ENCODE measurements at regions of chr6 and their contacts with region 1.

Region 1: GRCh38 chr6:21593412-21593926 is at the start of gene SOX4:
- DNase-seq: peak; percentile 98
- ATAC-seq: peak; percentile 65
- H3K4me3 ChIP-seq: peak within 1 kb of the TSS; percentile 99
- H3K27ac ChIP-seq: peak within 1 kb of the TSS; percentile 69
- H3K4me1 ChIP-seq: peaks cover 26% of the 10 kb centered on the region
- H3K27me3 ChIP-seq: no peaks in the 10 kb centered on the region
- CTCF ChIP-seq: no peak
- total RNA-seq, gene SOX4: 46.1 and 62.8 TPM in 2 replicates

Region 2: GRCh38 chr6:20969551-20969950 is 623.9 kb before region 1 on chr6:
- CTCF ChIA-PET with region 1: no interaction called
- POLR2A ChIA-PET with region 1: interaction called, 11 read pairs
- intact Hi-C with region 1: no loop called
- DNase-seq: no peak
- ATAC-seq: no peak
- H3K4me3 ChIP-seq: no peak overlapping the region
- H3K27ac ChIP-seq: no peak overlapping the region
- H3K4me1 ChIP-seq: no peaks in the 10 kb centered on the region
- H3K27me3 ChIP-seq: no peaks in the 10 kb centered on the region
- CTCF ChIP-seq: no peak

Region 3: DNA sequence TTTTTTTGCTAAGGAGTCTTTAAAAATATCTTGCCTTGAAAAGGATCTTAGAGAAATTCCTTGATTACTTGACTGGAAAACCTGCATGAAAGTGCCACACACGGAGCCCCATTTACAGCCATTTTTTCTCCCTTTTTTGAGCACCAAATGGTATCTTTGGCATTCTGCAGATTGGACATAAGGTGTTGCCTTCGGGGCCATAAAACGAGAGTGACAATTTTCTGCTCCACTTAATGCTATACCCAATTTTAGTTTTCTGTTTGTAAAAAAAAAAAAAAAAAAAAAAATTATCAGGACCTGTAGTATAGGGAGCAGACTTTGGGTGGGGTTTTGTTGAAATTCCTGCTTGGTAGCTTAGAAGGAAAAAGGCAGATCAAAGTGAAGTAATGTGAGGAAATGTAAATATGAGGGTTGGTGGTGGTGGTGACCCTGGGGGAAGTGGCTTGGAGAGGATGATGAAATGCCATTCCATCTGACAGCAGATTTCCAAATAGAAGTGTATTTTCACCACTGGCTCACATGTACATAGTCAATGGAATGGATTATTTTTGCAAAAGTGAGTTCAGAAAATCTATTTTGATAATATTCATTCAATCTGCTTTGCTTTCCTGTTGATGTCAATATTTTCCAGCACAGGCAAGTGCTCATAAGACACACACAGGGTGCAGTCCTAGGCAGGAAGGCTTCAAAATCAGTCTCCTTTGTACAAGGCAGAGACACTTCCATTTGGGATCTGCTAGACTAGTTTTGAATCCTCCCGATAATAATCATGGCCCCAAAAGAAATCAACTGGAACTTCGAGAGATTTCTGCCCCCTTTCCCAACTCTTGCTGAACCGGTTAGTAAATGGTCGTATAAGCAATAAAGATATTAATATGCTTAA is 211.9 kb before region 1 on chr6:
- CTCF ChIA-PET with region 1: no interaction called
- POLR2A ChIA-PET with region 1: no interaction called
- intact Hi-C with region 1: loop called (anchors 10 kb)
- DNase-seq: peak; percentile 89
- ATAC-seq: peak; percentile 80
- H3K4me3 ChIP-seq: no peak overlapping the region
- H3K27ac ChIP-seq: peak overlapping the region; percentile 46
- H3K4me1 ChIP-seq: peaks cover 36% of the 10 kb centered on the region
- H3K27me3 ChIP-seq: no peaks in the 10 kb centered on the region
- CTCF ChIP-seq: no peak

Region 4: DNA sequence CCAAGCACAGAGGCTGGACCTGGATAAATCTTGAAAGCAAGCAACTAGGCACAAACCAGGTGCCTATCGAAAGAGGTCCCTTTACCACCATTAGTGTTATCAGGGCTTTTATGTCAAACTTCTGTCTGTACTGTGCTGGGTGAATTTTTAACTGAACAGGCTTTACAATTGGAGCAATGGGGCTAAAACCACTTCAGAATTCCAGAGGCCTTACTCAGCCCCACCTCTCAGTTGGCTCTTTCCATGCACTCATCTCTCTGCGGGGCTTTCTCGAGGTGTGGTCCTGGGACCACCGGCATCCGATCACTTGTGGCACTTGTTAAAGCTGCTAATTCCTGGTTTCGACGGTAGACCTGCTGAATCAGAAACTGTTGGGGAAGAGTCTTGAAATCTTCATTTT is 232.6 kb after region 1 on chr6:
- CTCF ChIA-PET with region 1: no interaction called
- POLR2A ChIA-PET with region 1: no interaction called
- intact Hi-C with region 1: loop called (anchors 5 kb)
- DNase-seq: peak; percentile 62
- ATAC-seq: peak; percentile 40
- H3K4me3 ChIP-seq: no peak overlapping the region
- H3K27ac ChIP-seq: no peak overlapping the region
- H3K4me1 ChIP-seq: peaks cover 33% of the 10 kb centered on the region
- H3K27me3 ChIP-seq: no peaks in the 10 kb centered on the region
- CTCF ChIP-seq: no peak

Region 5: DNA sequence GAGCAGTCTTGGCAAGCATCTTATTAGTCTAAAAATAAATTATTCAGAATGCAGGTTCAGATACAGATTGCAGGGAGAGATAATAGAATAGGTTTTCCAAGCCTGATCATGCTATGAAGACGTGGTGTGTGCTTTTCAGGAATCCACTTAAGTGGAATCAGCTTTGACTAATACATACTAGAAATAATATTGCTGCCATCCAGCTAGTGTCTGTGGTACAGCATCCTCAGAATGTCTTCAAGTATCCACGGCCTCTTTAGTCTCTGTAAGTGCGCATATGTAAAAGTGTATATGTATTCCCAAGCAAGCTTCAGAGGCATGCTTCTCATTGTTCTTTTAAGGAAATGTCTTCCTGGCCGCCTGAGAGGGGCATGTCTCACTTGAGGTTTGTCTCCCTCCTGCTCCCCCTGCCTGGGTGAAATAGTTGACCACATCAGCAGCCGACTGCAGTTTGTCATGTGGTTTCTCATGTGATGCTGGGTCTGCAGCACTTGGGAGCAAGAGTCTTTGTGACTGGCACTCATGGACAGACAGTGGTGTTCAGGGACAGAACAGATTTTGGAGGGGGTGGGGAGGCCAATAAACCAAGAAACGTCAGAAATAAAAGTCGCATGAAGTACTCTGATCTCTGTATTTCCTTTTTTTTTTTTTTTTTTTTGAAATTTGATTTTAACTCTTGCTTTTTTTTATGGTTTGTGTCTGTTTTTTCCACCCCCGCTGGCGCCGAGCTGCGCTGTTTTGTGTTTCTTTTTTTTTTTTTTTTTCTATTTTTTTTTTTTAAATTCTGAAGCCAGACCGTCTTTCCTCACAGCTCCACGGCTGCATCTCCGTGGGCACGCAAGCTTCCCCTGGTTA is 552.6 kb after region 1 on chr6:
- CTCF ChIA-PET with region 1: no interaction called
- POLR2A ChIA-PET with region 1: no interaction called
- intact Hi-C with region 1: loop called (anchors 10 kb)
- DNase-seq: no peak
- ATAC-seq: no peak
- H3K4me3 ChIP-seq: no peak overlapping the region
- H3K27ac ChIP-seq: no peak overlapping the region
- H3K4me1 ChIP-seq: peaks cover 10% of the 10 kb centered on the region
- H3K27me3 ChIP-seq: no peaks in the 10 kb centered on the region
- CTCF ChIP-seq: no peak

Region 6: GRCh38 chr6:22558334-22558747 is 964.9 kb after region 1 on chr6:
- CTCF ChIA-PET with region 1: no interaction called
- POLR2A ChIA-PET with region 1: no interaction called
- intact Hi-C with region 1: loop called (anchors 10 kb)
- DNase-seq: peak; percentile 93
- ATAC-seq: peak; percentile 95
- H3K4me3 ChIP-seq: no peak overlapping the region
- H3K27ac ChIP-seq: peak overlapping the region; percentile 74
- H3K4me1 ChIP-seq: peaks cover 21% of the 10 kb centered on the region
- H3K27me3 ChIP-seq: no peaks in the 10 kb centered on the region
- CTCF ChIP-seq: no peak

Region 7: DNA sequence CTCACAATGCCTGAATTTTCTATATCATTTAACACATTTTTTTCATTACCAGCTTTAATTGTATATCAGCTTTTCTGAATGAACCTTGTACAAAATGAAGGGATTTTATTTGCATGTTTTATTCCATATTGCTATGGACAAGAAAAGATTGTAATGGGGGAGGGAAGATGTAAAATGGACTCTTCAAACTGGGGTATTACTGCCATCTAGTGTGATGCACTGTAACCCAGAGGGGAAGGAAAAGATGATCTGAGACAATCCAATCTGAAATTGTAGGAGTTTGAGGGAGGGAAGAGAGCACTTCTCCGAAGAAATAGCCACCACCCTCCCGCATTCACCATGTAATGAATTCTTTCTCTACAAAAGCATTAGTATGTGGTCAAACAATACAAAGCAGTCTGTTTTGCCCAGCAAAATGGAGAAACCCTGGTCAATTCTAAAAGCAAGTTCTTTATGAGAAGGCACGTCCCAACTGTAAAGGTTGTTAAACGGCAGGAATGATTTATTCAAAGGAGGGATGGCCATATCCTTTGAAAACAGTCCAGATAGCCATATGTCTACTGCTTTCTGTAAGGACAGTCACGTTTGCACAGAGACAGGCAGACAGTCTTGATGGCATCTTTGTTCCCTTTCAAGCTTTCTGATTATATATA is 1853.1 kb after region 1 on chr6:
- CTCF ChIA-PET with region 1: no interaction called
- POLR2A ChIA-PET with region 1: no interaction called
- intact Hi-C with region 1: loop called (anchors 1 kb)
- DNase-seq: peak; percentile 79
- ATAC-seq: peak; percentile 81
- H3K4me3 ChIP-seq: no peak overlapping the region
- H3K27ac ChIP-seq: no peak overlapping the region
- H3K4me1 ChIP-seq: 0 out of 2 replicates have a peak, but pooled peaks cover 4% of the 10 kb centered on the region
- H3K27me3 ChIP-seq: no peaks in the 10 kb centered on the region
- CTCF ChIP-seq: peak; percentile 85